ENCODE measurements at regions of chr14 and their contacts with region 1.

Region 1: DNA sequence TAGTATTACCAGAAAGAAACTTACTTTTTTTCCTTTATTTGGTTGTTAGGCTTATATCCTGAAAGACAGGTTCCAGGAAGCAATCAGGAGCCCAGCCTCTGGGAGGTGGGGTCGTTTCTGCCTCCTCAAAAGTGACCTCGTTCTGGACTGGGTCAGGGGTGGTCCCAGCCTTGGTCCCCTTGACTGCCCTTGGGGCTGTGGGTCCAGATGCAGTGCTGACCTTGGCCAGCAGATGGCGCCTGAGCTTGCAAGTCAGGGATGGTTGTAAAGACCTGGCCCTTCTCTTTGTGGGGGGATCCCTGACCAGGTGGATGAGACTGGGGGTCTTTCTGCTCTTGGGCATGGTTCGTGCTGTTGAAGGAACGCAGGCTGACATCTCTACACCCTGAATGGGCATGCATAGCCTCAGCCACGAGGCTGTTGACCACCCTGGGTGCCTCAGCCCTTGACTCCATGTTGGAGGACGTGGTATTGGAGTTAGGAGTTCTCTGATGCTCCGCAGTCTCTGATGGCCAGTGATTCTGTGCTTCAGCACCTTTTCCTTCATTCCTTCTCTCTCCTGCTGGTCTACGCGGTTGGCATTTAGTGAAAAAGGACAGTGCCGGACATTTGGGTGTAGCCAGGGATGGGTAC is 62.4 kb downstream of the ADCK1 start:
- DNase-seq: peak in 34 of 35 experiments; percentile 15 to 76 (median 53)
- ATAC-seq: peak in 3 of 4 experiments; percentile 46 to 70 (median 63)
- H3K4me3 ChIP-seq: no peak overlapping the region
- H3K4me3 Mint-ChIP-seq: no peak overlapping the region
- H3K27ac ChIP-seq: no peak overlapping the region
- H3K27ac Mint-ChIP-seq: no peak overlapping the region
- H3K4me1 ChIP-seq: peaks cover 0 to 3% of the 10 kb centered on the region in 2 experiments
- H3K4me1 Mint-ChIP-seq: no peaks in the 10 kb centered on the region
- H3K27me3 ChIP-seq: peaks cover 0 to 2% of the 10 kb centered on the region in 2 experiments
- H3K27me3 Mint-ChIP-seq: no peaks in the 10 kb centered on the region

Region 2: DNA sequence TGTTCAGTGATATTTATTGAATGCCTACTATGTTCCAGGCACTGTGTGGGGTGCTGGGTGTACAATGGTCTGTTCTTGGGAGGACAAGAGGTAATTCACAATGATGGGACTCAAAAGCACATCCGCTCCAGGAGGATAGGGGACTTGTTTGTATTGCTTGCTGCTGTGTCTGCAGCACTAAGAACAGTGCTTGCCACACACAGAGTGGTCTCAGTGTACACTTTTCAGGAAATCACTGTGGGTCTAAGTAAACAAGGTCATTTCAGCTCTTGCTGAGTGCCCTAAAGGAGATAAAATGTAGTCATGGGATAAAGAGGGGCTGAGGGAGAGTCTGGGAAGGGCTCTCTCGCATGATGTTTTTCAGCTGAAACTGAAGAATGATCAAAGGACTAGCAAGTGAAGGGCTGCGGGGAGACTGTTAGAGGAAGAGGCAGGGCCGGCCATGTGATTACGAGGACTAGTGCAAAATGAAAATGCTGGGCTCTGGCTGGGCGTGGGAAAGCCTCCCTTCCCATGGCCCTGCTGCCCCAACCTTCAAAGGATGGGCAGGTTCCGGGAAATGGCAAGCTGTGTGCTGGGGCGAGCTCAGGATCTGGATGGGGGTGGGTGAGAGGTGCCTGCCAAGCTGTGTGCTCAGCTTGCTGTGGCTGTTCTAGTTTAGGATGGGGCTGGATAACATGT is 23.3 kb before region 1 on chr14:
- CTCF ChIA-PET with region 1: no interaction called
- POLR2A ChIA-PET with region 1: no interaction called
- DNase-seq: no peak
- ATAC-seq: no peak
- H3K4me3 ChIP-seq: no peak overlapping the region
- H3K4me3 Mint-ChIP-seq: peak overlapping the region in 1 of 3 donors; percentile 37
- H3K27ac ChIP-seq: no peak overlapping the region
- H3K27ac Mint-ChIP-seq: no peak overlapping the region
- H3K4me1 ChIP-seq: peaks cover 2 to 4% of the 10 kb centered on the region in 2 experiments
- H3K4me1 Mint-ChIP-seq: peaks cover 4 to 9% (median 7%) of the 10 kb centered on the region in 3 donors
- H3K27me3 ChIP-seq: no peaks in the 10 kb centered on the region
- H3K27me3 Mint-ChIP-seq: no peaks in the 10 kb centered on the region

Region 3: DNA sequence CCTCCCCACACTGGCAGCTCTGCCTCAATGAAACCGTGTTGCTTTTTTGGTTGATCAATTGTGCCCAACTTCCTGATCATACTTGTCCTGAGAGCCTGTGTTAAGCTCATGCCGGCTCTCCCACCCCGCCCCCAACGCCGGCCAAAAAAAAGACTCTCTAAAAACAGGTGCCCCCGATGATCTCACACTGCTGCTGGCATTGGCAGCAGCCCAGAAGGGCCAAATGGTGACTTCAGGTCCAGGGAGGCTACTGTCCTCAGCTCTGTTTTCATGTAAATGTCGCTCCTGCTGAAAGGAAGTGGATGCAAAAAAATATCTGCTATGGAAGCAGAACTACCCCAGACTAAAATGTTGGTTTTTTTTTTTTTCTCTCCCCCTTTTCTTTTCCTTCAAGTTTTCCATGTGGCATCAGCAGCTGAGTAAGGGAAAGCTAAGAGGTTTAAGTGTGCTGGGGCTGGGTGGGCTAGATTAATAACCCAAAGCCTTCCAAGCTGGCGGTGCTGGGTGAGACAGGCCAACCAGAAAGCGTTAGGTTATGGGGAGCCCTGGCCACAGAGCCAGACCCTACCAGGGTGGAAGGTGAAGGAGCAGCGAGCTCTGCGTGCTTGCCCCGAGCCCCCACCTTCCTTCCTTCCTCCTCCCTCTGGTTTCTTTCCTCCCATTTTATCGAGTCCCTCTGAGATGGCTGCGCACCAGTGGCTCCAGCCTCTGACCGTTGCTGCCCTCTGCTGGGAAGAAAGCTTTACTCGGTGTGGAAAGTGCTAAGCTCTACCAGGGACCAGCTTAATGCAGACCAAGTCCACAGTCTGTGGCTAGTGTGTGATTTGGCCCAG is 704.0 kb after region 1 on chr14:
- CTCF ChIA-PET with region 1: interaction called, 4 to 13 read pairs
- POLR2A ChIA-PET with region 1: no interaction called
- DNase-seq: peak; percentile 0 to 54 (median 18)
- ATAC-seq: peak; percentile 46 to 70 (median 50)
- H3K4me3 ChIP-seq: peak overlapping the region in 1 of 2 donors; percentile 18
- H3K4me3 Mint-ChIP-seq: peak overlapping the region in 2 of 3 donors; percentile 40 to 53
- H3K27ac ChIP-seq: no peak overlapping the region
- H3K27ac Mint-ChIP-seq: no peak overlapping the region
- H3K4me1 ChIP-seq: no peaks in the 10 kb centered on the region
- H3K4me1 Mint-ChIP-seq: peaks cover 4 to 9% (median 9%) of the 10 kb centered on the region in 3 donors
- H3K27me3 ChIP-seq: peaks cover 0 to 2% of the 10 kb centered on the region in 2 experiments
- H3K27me3 Mint-ChIP-seq: no peaks in the 10 kb centered on the region